ENCODE measurements at regions of chr12 and their contacts with region 1.

Region 1: GRCh38 chr12:10212201-10213131 is at the start of gene GABARAPL1:
- DNase-seq: peak; percentile 98
- H3K4me3 ChIP-seq: peak within 1 kb of the TSS; percentile 84 to 91
- H3K27ac ChIP-seq: peak within 1 kb of the TSS; percentile 100
- H3K4me1 ChIP-seq: peaks cover 0 to 9% of the 10 kb centered on the region in 2 donors
- H3K27me3 ChIP-seq: no peaks in the 10 kb centered on the region
- CTCF ChIP-seq: no peak
- POLR2A ChIP-seq: peak; percentile 67 to 95
- total RNA-seq, gene GABARAPL1: 42.9 to 216 (median 62.7) TPM

Region 2: DNA sequence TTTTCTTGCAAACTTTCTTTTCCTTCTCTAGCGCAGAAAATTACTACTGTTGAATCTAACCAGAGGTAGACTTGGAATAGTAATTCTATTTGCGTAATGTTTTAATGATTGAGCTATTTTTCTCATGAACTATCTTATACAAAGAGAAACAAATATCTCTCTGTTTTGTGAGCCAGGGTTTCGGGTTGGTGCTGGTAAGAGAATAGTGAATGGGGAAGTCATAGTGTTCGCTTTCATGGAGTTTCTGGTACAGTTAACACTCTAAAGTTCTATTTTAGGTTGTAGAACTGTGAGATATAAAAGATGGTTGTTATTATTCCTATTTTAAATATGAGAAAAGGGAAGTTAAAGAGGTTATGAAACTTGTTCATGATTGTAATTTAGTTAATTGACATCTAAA is 220.2 kb before region 1 on chr12:
- intact Hi-C with region 1: no loop called
- DNase-seq: no peak
- H3K4me3 ChIP-seq: no peak overlapping the region
- H3K27ac ChIP-seq: no peak overlapping the region
- H3K4me1 ChIP-seq: no peaks in the 10 kb centered on the region
- H3K27me3 ChIP-seq: no peaks in the 10 kb centered on the region
- CTCF ChIP-seq: no peak
- POLR2A ChIP-seq: no peak

Region 3: DNA sequence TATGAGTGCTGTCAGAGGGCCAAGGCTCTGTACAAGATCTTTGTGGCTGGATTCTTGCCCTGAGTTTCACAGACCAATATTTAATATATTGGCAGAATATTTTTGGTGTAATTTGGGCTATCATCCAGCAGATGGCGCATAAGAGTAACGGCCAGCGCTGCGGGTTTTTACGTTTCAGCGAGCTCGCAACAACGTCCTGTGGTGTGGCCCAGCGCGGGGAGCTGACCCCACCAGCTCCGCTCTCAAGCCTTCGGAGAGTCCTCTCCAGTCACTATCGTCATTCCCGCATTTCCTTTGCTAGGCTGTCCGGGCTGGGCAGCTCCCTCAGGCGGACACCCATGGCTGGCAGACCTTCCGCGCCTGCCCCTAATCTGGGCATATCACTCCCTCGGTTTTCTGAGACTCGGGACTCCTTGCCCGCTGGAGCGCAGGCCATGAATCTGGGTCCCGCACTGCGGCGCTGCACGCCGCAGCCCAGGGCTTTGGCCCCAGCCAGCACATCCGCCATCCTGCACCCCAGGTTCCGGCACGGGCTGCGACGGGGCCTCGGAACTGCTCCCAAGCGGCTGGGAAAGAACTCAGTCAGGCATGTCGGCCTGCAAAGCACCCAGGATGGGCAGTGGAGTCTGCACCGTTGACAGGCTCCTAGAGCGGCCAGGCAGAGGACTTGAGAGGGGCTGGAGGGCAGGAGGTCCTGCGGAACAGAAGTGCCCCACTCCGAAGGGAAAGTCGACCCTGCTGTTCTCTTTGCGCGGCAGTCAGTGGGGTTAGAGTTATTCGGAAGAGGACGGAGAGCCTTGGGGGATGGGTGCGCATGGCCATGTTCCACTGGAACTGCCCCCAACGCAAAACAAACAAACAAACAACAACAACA is 59.0 kb before region 1 on chr12:
- intact Hi-C with region 1: no loop called
- DNase-seq: peak; percentile 59 to 66
- H3K4me3 ChIP-seq: peak overlapping the region; percentile 45 to 49
- H3K27ac ChIP-seq: peak overlapping the region; percentile 75 to 77
- H3K4me1 ChIP-seq: no peaks in the 10 kb centered on the region
- H3K27me3 ChIP-seq: no peaks in the 10 kb centered on the region
- CTCF ChIP-seq: peak; percentile 67 to 82 (median 74)
- POLR2A ChIP-seq: peak in 1 of 2 donors; percentile 11

Region 4: DNA sequence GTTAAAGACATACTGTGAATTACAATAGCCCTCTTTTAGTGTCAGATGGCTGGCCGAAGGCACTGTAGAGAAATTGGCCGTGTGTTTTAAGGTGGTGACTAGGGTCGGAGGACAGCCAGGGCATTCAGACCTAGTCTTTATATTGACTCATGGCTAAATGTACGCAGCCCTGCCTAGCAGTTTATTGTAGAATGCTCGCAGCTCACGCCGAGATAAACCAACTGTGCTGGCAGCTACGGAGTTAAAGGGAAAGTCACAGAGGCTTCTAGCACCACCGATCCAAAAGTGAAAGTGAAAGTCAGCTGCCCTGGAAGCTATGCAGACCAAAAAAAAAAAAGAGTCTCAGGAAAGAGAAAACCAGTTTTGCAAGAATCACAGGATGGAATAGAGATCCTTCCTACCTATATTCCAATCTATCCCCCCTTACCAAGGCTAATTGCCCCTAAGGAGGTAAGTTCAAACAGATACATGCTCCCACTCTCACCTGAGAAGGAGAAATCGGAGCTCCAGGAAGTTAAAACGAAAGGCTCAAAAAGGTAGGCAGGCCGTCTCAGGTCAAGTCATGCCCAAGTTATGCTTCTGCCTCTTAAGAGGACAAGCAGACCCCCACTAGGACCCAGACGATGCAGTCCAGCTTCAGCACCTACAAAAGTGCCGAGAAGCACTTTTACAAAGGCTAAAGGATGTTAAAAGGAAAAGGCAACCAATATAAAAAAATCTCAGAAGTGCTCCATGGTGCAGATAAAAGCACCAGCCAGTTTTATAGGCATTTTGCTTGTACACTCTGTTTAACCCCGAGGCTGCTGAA is 152.6 kb after region 1 on chr12:
- intact Hi-C with region 1: loop called (anchors 10 kb)
- DNase-seq: peak; percentile 61 to 83
- H3K4me3 ChIP-seq: peak overlapping the region; percentile 39 to 58
- H3K27ac ChIP-seq: peak overlapping the region; percentile 94 to 98
- H3K4me1 ChIP-seq: peaks cover 0 to 8% of the 10 kb centered on the region in 2 donors
- H3K27me3 ChIP-seq: no peaks in the 10 kb centered on the region
- CTCF ChIP-seq: no peak
- POLR2A ChIP-seq: peak in 1 of 2 donors; percentile 9

Measured in uterus (tissue), 4 donors.